ENCODE measurements at regions of chr5 and their contacts with region 1.

Region 1: GRCh38 chr5:140639148-140639979 is at the start of gene TMCO6:
- DNase-seq: peak; percentile 83 to 98
- H3K4me3 ChIP-seq: peak within 1 kb of the TSS; percentile 61 to 86
- H3K27ac ChIP-seq: peak within 1 kb of the TSS; percentile 85 to 89
- H3K4me1 ChIP-seq: peaks cover 3 to 8% of the 10 kb centered on the region in 2 donors
- H3K27me3 ChIP-seq: no peaks in the 10 kb centered on the region
- CTCF ChIP-seq: peak; percentile 25 to 76 (median 70)
- total RNA-seq, gene TMCO6: 87.7 TPM

Region 2: DNA sequence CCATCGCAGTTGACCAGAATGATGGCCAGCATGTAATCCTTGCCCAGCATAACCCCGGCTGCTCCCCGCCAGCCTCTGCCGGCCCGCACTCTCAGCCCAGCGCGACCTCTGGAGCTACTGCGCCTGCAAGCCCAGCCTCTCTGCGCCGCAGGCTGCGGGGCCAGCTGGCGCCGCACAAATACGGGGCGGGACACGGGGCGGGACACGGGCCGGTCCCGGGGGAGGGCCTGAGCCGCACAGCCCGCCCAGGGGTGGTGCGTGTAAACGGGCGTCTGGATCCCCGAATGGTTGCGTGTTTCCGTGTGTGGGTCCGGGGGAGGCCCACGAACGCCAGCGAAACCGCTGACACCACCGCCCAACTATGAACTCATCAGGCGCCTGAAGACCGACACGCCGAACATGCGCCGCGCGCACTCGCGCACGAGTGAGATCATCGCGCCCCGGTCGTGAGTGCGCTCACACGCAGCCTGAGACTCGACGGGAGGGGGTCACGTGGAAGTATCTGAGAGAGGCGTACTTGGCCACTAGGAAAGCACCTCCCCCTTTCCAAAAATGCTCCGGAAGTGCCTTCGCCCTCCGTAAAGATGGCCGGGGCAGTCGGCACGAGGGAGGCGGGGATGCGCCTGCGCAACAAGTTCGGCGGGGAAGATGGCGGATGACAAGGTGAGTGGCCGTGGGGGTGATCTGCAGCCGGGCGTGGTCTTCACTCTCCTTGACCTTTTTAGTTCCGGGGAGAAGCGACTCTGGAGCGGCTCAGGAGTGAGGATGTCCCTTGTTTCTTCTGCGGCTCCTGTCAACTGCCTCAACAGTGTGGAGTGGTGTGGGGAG is 75.0 kb before region 1 on chr5 and contains the starts of genes APBB3 and SLC35A4:
- intact Hi-C with region 1: loop called (anchors 1 kb)
- DNase-seq: peak; percentile 96 to 99
- H3K4me3 ChIP-seq: peak within 1 kb of the TSS; percentile 88 to 92
- H3K27ac ChIP-seq: peak within 1 kb of the TSS; percentile 92 to 93
- H3K4me1 ChIP-seq: peaks cover 16 to 24% of the 10 kb centered on the region in 2 donors
- H3K27me3 ChIP-seq: no peaks in the 10 kb centered on the region
- CTCF ChIP-seq: no peak
- total RNA-seq, gene APBB3: 47.3 TPM
- total RNA-seq, gene SLC35A4: 46.2 TPM

Region 3: DNA sequence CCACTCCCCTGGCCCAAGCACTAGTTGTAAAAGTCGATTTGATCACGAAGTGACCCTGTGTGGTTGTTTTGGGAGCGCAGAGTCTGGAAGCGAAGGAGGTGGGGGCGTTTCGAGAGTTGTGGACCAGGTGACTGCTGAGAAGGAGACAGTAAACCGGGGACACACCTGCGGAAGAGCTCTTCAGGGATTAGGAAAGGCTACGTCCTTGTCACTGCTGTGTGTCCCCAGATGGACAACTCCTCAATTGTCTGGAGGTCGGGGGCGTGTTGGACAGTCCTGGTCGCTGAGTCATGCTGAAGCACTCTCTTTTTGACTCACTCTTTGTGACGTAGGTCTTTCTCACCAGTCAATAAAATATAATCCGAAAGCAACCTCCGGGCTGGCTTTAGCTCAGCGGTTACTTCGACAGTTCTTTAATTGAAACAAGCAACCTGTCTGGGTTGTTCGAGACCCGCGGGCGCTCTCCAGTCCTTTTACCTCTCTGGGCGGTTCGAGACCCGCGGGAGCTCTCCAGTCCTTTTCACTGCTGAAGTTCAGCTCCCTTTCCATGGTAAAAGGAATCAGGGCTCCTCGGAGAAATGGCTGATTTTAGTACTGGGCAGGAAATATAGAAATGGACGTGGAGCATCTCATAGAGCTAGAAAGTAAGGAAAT is 71.7 kb after region 1 on chr5:
- intact Hi-C with region 1: no loop called
- DNase-seq: peak; percentile 76 to 97
- H3K4me3 ChIP-seq: peak overlapping the region; percentile 64 to 71
- H3K27ac ChIP-seq: peak overlapping the region; percentile 90 to 94
- H3K4me1 ChIP-seq: peaks cover 0 to 4% of the 10 kb centered on the region in 2 donors
- H3K27me3 ChIP-seq: no peaks in the 10 kb centered on the region
- CTCF ChIP-seq: no peak

Region 4: GRCh38 chr5:140734354-140734753 is 95.0 kb after region 1 on chr5:
- intact Hi-C with region 1: no loop called
- DNase-seq: no peak
- H3K4me3 ChIP-seq: no peak overlapping the region
- H3K27ac ChIP-seq: no peak overlapping the region
- H3K4me1 ChIP-seq: no peaks in the 10 kb centered on the region
- H3K27me3 ChIP-seq: no peaks in the 10 kb centered on the region
- CTCF ChIP-seq: peak in 2 of 3 experiments; percentile 35 to 44